Activated CD8-positive, alpha-beta T cell treated with anti-CD3 and anti-CD28 coated beads for 36 hours (primary cell): ENCODE measurements at regions of chr19 and their contacts with region 1.

Region 1: GRCh38 chr19:5719961-5720790 is at the starts of genes CATSPERD and LONP1:
- DNase-seq: peak; percentile 99
- ATAC-seq: peak; percentile 87
- H3K4me3 Mint-ChIP-seq: peak within 1 kb of the TSS; percentile 92
- H3K27ac Mint-ChIP-seq: peak within 1 kb of the TSS; percentile 97
- H3K4me1 Mint-ChIP-seq: peaks cover 24% of the 10 kb centered on the region
- H3K27me3 Mint-ChIP-seq: no peaks in the 10 kb centered on the region
- CTCF ChIP-seq: peak; percentile 87
- total RNA-seq, gene CATSPERD: not detected
- total RNA-seq, gene LONP1: 324 to 342 TPM

Region 2: DNA sequence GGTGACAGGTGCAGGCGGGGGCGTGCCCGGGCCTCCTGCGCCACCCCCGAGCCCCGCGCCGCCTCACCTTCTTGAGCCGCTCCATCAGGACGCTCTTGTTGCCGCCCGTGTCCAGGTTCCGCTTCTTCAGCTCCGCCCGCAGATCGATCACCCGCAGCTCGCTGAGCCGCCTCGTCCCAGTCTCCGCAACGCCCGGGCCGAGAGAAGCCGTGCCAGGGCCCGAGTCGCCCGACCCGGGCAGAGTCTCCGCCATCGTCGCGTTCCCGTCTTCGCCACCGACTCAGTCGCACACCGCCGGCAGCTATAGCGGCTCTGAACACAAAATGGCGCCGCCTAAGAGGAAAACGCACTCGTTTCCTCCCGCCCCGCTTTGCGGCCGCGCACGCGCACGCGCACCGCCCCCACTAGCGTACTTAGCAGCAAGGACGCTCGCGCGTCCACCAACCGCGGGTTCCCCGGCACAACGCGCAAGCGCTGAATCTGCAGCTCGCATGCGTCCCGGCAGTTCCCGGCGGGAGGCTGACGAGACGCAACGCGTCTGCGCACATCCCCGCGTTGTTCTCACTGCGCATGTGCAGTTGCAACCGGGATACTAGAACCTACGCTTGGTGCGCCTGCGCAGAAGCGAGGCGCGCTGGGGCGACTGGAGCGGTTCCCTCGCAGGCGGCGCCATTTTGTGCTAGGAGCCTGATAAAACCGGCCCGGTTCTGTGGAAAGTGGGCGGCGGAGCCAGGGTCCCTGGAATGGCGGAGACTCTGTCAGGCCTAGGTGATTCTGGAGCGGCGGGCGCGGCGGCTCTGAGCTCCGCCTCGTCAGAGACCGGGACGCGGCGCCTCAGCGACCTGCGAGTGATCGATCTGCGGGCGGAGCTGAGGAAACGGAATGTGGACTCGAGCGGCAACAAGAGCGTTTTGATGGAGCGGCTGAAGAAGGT is 97.4 kb before region 1 on chr19 and contains the starts of genes SAFB and SAFB2:
- CTCF ChIA-PET with region 1: interaction called, 5 read pairs
- POLR2A ChIA-PET with region 1: interaction called, 12 read pairs
- intact Hi-C with region 1: no loop called
- DNase-seq: peak; percentile 99
- ATAC-seq: peak; percentile 93
- H3K4me3 Mint-ChIP-seq: peak within 1 kb of the TSS; percentile 100
- H3K27ac Mint-ChIP-seq: peak within 1 kb of the TSS; percentile 100
- H3K4me1 Mint-ChIP-seq: peaks cover 64% of the 10 kb centered on the region
- H3K27me3 Mint-ChIP-seq: no peaks in the 10 kb centered on the region
- CTCF ChIP-seq: no peak
- total RNA-seq, gene SAFB: 124 to 132 TPM
- total RNA-seq, gene SAFB2: 70.8 to 78.0 TPM

Region 3: DNA sequence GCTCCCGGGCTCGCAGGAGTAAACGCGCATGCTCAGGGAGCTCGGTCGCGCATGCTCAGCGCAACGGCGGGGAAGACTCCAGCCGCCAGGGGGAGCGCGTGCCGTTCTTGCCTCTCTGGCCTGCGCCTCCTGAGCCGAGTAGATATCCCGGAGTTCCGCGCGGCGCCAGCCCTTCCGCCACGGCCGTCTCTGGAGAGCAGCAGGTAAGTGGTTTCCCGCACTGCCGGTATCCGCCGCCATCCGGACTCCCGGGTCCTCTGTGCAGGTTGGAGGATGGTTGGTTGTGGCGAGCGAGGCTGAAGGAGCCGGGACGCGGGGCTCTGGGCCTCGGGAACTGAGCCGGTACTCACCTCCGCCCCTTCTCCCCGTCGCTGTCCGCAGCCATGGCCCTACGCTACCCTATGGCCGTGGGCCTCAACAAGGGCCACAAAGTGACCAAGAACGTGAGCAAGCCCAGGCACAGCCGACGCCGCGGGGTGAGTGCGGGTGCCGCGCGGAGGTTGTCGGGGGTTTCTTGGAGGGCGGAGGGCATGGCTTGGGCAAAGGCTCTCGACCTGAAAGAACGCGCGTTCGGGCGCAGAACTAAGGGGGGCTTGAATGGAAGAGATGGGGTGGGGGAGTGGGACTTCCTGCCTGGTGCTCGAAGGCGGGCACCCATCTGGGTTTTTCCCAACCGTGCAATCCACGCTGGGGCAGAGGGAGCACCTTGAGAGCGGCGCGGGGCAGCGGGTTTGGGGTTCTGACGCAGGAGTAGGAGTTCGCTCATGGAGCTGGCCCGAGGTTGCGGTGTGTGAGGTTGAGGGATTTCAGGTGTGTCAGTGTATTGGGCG is 29.8 kb before region 1 on chr19 and contains the start of gene RPL36:
- CTCF ChIA-PET with region 1: interaction called, 23 read pairs
- POLR2A ChIA-PET with region 1: interaction called, 516 read pairs
- intact Hi-C with region 1: no loop called
- DNase-seq: peak; percentile 99
- ATAC-seq: peak; percentile 52
- H3K4me3 Mint-ChIP-seq: peak within 1 kb of the TSS; percentile 99
- H3K27ac Mint-ChIP-seq: peak within 1 kb of the TSS; percentile 97
- H3K4me1 Mint-ChIP-seq: peaks cover 20% of the 10 kb centered on the region
- H3K27me3 Mint-ChIP-seq: no peaks in the 10 kb centered on the region
- CTCF ChIP-seq: peak; percentile 98
- total RNA-seq, gene RPL36: 1,711 to 1,715 TPM

Region 4: DNA sequence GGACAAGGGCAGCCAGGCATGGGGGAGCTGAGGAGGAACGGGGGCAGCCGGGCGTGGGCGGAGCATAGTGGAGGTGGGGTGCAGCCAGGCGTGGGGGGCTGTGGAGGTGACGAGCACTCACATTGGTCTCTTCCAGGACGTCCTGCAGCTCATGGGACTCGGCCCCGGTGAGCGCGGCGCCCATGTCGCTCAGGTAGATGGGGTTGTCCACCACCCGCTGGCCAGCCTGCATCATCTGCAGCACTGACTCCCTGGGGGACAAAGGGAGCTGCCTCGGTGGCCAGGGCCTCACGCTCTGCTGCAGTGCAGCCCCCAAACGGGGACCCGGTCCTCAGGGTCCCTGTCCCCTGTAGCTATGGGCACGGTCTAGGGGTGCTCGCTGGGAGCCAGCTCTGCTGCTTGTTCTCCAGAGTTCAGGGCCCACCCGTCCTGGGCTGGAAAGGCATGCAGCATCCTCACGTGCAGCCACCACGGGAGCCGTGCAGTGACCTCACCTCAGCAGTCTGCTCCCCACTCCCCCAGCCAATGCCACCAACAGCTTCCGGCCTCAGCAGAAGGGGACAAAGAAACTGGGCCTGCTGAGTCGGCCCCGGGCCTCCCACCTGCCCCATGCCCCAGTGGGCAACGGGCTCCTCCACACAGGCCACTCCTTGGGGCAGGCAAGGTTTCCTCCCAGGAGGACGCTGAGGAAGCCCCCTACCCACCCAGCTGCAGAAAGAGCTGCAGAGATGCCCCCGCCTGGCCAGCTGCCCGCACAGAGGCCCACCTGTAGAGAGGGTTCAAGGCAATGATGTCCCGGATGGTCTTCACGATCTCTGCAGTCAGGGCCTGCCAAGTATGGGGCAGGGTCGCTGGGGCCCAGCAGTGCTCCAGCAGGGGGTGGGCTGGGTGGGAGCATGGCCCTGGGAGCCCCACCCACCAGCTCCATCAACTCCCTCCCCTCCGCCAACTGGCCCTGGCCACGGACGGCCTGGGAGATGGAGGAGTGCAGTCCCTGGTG is 12.3 kb before region 1 on chr19:
- CTCF ChIA-PET with region 1: interaction called, 4 read pairs
- POLR2A ChIA-PET with region 1: interaction called, 82 read pairs
- intact Hi-C with region 1: no loop called
- DNase-seq: no peak
- ATAC-seq: peak; percentile 19
- H3K4me3 Mint-ChIP-seq: no peak overlapping the region
- H3K27ac Mint-ChIP-seq: no peak overlapping the region
- H3K4me1 Mint-ChIP-seq: no peaks in the 10 kb centered on the region
- H3K27me3 Mint-ChIP-seq: no peaks in the 10 kb centered on the region
- CTCF ChIP-seq: no peak

Region 5: GRCh38 chr19:5790573-5791520 is 70.7 kb after region 1 on chr19 and contains the start of gene DUS3L:
- CTCF ChIA-PET with region 1: interaction called, 8 read pairs
- POLR2A ChIA-PET with region 1: interaction called, 11 read pairs
- intact Hi-C with region 1: no loop called
- DNase-seq: peak; percentile 99
- ATAC-seq: peak; percentile 96
- H3K4me3 Mint-ChIP-seq: peak within 1 kb of the TSS; percentile 100
- H3K27ac Mint-ChIP-seq: peak within 1 kb of the TSS; percentile 100
- H3K4me1 Mint-ChIP-seq: peaks cover 17% of the 10 kb centered on the region
- H3K27me3 Mint-ChIP-seq: no peaks in the 10 kb centered on the region
- CTCF ChIP-seq: no peak
- total RNA-seq, gene DUS3L: 69.6 to 74.5 TPM

Region 6: DNA sequence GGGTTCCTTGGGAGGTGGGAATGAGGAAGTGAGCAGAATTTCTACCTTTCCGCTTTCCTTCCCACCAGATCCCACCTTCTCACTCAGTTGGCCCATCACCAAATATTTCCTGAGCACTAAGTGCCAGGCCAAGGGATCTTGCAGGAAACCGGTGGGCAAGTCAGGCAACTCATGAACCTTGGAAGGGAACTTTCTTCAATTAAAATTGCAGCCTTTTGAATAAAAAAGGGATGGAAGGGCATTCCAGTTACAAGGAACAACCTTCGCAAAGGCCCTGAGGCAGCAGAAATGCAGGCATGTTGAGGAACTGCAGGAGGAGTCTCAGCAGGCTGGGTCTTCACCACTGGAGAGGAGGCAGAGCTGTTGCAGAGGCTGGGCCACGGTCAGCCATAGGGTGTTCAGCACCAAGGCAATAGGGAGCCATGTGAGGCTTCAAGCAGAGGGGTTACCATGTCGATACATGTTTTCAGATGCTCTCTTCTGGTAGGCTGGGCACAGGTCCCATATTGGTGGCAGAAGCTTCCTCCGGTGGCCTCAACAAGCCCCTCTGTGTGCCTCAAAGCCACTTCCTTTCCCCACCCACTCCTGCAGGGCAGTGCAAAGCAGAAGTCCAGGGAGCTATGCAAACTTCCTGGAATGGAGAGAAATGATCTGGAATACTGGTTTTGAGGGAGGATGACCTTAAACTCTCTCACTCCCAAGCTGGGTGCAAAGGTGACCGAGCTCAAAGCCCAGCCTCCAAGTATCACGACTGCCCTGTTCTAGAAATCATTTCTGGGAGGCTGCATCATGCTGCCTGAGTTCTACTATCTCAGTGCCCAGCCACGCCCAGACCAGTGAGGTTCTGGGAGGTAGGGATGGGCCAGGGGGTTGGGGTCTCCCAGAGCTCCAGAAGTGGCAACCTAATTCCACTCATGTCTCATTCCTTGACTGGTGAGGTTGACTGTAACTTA is 119.2 kb after region 1 on chr19 and contains the start of gene FUT6:
- CTCF ChIA-PET with region 1: no interaction called
- POLR2A ChIA-PET with region 1: no interaction called
- intact Hi-C with region 1: no loop called
- DNase-seq: no peak
- ATAC-seq: no peak
- H3K4me3 Mint-ChIP-seq: no peak within 1 kb of the TSS
- H3K27ac Mint-ChIP-seq: no peak within 1 kb of the TSS
- H3K4me1 Mint-ChIP-seq: peaks cover 5% of the 10 kb centered on the region
- H3K27me3 Mint-ChIP-seq: peaks cover 1% of the 10 kb centered on the region
- CTCF ChIP-seq: no peak
- total RNA-seq, gene FUT6: not detected

Region 7: DNA sequence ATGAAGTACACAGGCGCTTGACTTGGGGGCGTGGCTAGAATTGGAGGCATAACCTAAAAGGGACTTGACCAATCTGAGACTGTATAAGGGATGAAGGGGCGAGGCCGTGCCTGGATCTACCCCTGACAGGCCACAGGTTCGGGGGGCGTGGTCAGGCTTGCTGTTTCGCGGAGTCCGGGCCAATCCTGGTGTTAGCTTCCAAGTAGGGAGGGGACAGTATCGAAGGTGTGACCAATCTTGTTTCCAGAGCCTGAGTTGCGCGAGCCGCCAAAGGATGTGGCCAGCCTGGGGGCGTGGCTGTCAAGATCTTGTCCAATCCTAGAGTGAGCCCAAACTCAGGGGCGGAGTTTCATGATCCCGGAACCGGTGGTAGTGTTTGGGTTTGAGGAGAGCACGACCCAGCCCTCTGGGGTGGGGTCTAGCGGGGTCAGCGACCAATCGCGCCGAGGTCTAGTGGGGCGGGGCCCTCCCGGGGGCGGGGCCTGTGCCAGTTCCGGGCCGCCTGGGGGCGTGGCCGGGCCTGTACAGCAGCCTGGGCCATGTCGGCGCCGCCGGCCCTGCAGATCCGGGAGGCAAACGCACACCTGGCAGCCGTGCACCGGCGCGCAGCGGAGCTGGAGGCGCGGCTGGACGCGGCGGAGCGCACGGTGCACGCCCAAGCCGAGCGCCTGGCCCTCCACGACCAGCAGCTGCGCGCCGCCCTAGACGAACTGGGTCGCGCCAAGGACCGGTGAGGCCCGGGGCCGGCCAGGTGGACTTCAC is 184.4 kb after region 1 on chr19 and contains the start of gene VMAC:
- CTCF ChIA-PET with region 1: interaction called, 7 read pairs
- POLR2A ChIA-PET with region 1: interaction called, 13 read pairs
- intact Hi-C with region 1: no loop called
- DNase-seq: peak; percentile 100
- ATAC-seq: peak; percentile 83
- H3K4me3 Mint-ChIP-seq: peak within 1 kb of the TSS; percentile 99
- H3K27ac Mint-ChIP-seq: peak within 1 kb of the TSS; percentile 100
- H3K4me1 Mint-ChIP-seq: peaks cover 40% of the 10 kb centered on the region
- H3K27me3 Mint-ChIP-seq: no peaks in the 10 kb centered on the region
- CTCF ChIP-seq: no peak
- total RNA-seq, gene VMAC: 1.2 to 2.5 TPM